ENCODE measurements at regions of chr1 and their contacts with region 1.

Region 1: DNA sequence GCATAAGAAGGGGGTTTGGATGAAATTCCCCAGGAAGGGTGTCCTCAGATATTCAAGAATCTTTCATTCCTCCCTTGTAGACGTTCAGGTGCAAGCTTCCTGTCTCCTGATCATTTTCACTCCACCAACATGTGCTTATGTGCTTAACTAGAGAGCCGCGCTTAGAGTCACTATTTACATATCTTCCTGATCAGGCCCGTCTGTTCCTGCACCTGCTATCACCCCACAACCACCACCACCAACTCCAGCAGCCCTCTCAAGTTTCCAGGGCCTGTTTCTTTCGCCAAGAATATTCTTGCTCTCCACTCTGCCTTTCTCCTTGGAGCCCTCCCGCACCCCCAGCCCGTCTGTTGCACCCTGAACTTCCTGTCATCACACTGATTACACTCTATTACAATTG is 113.4 kb downstream of the SPSB1 start:
- DNase-seq: no peak
- ATAC-seq: no peak
- H3K4me3 ChIP-seq: no peak overlapping the region
- H3K27ac ChIP-seq: no peak overlapping the region
- H3K4me1 ChIP-seq: peaks cover 6% of the 10 kb centered on the region
- H3K27me3 ChIP-seq: no peaks in the 10 kb centered on the region
- CTCF ChIP-seq: no peak

Region 2: GRCh38 chr1:9371391-9371935 is 34.6 kb before region 1 on chr1:
- intact Hi-C with region 1: loop called (anchors 5 kb)
- DNase-seq: no peak
- ATAC-seq: peak; percentile 7
- H3K4me3 ChIP-seq: no peak overlapping the region
- H3K27ac ChIP-seq: peak overlapping the region; percentile 51
- H3K4me1 ChIP-seq: peaks cover 29% of the 10 kb centered on the region
- H3K27me3 ChIP-seq: no peaks in the 10 kb centered on the region
- CTCF ChIP-seq: no peak

Region 3: DNA sequence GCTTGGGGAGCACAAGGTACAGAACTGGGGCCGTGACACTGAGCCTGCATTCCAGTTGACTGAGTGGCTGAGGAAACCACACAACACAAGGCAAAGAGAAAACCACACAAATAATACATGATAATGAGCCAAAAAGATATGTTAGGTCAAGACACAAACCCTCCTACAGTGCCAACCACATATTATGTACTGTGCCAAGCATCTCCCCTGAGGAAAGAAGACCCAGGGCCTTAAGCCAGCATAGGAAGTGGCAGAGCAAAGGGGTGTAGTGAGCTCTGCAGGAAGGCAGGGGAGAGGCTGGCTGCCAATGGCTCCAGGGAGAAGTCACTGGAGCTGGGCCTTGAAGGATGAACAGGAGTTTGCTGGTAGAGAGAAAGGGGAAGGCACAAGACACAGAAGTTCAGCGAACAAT is 475.7 kb after region 1 on chr1:
- intact Hi-C with region 1: no loop called
- DNase-seq: no peak
- ATAC-seq: no peak
- H3K4me3 ChIP-seq: no peak overlapping the region
- H3K27ac ChIP-seq: no peak overlapping the region
- H3K4me1 ChIP-seq: no peaks in the 10 kb centered on the region
- H3K27me3 ChIP-seq: no peaks in the 10 kb centered on the region
- CTCF ChIP-seq: no peak